Calu3 (cell line): ENCODE measurements at regions of chr11 and their contacts with region 1.

Region 1: GRCh38 chr11:28756977-28757376 is 648.8 kb downstream of the METTL15 start:
- DNase-seq: no peak
- H3K4me3 Mint-ChIP-seq: no peak overlapping the region
- H3K27ac Mint-ChIP-seq: peak overlapping the region; percentile 90
- H3K4me1 Mint-ChIP-seq: peaks cover 54% of the 10 kb centered on the region
- H3K27me3 Mint-ChIP-seq: no peaks in the 10 kb centered on the region
- CTCF ChIP-seq: no peak

Region 2: GRCh38 chr11:28621753-28622152 is 135.2 kb before region 1 on chr11:
- CTCF ChIA-PET with region 1: no interaction called
- intact Hi-C with region 1: loop called (anchors 5 kb)
- DNase-seq: peak; percentile 9
- H3K4me3 Mint-ChIP-seq: no peak overlapping the region
- H3K27ac Mint-ChIP-seq: peak overlapping the region; percentile 82
- H3K4me1 Mint-ChIP-seq: peaks cover 59% of the 10 kb centered on the region
- H3K27me3 Mint-ChIP-seq: no peaks in the 10 kb centered on the region
- CTCF ChIP-seq: no peak

Region 3: DNA sequence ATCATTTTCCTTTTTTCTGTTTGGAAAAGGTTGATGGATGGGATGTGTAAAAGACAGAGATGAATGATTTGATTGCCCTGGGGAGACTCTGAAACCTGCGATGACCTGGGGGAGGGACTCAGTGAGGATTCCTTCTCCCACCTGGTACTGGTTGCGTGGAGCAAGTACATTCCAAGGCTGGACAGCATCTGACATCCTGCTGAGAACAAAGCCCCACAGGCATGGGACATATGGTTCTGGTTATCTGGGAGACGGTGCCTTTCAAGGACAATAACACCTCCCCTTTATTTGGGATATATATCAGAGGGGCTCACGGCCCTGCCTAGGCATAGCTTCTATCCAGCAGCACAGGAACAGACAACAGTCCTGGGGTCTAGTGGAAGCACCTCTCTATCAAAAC is 120.9 kb before region 1 on chr11:
- CTCF ChIA-PET with region 1: no interaction called
- intact Hi-C with region 1: no loop called
- DNase-seq: no peak
- H3K4me3 Mint-ChIP-seq: no peak overlapping the region
- H3K27ac Mint-ChIP-seq: no peak overlapping the region
- H3K4me1 Mint-ChIP-seq: no peaks in the 10 kb centered on the region
- H3K27me3 Mint-ChIP-seq: no peaks in the 10 kb centered on the region
- CTCF ChIP-seq: no peak

Region 4: GRCh38 chr11:28738549-28738948 is 18.4 kb before region 1 on chr11:
- CTCF ChIA-PET with region 1: interaction called, 10 read pairs
- intact Hi-C with region 1: no loop called
- DNase-seq: no peak
- H3K4me3 Mint-ChIP-seq: no peak overlapping the region
- H3K27ac Mint-ChIP-seq: peak overlapping the region; percentile 71
- H3K4me1 Mint-ChIP-seq: peaks cover 76% of the 10 kb centered on the region
- H3K27me3 Mint-ChIP-seq: no peaks in the 10 kb centered on the region
- CTCF ChIP-seq: no peak

Region 5: GRCh38 chr11:28836285-28837081 is 79.5 kb after region 1 on chr11:
- CTCF ChIA-PET with region 1: interaction called, 10 read pairs
- intact Hi-C with region 1: loop called (anchors 1 kb)
- DNase-seq: peak; percentile 60
- H3K4me3 Mint-ChIP-seq: peak overlapping the region; percentile 59
- H3K27ac Mint-ChIP-seq: peak overlapping the region; percentile 96
- H3K4me1 Mint-ChIP-seq: peaks cover 55% of the 10 kb centered on the region
- H3K27me3 Mint-ChIP-seq: no peaks in the 10 kb centered on the region
- CTCF ChIP-seq: no peak

Region 6: DNA sequence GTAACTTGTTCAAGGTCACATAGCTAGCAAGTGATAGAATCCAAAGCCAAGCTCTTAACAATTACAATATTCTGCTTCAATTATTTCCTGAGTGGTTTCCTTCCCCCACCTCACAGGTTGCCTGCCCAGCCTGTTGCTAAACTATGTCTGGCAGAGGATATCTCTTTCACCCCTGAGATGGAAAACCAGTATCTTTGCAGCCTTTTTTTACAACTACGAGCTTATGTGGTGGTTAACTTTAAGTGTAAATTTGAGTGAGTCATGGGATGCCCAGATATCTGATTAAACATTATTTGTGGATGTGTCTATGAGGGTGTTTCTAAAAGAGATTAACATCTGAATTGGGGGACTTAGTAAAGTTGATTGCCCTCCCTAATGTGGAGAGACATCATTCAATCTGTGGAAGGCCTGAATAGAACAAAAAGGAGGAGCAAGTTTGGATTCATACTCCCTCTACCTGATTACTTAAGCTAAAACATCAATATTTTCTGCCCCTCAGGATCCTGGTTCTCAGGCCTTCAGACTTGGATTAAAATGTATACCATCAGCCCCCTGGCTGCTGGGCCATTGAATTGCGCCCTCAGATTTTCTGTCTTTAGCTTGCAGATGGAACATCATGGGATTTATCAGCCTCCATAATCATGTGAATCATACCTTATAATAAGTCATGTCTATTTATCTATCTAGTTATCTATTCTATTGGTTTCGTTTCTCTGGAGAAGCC is 263.1 kb after region 1 on chr11:
- CTCF ChIA-PET with region 1: interaction called, 5 read pairs
- intact Hi-C with region 1: loop called (anchors 5 kb)
- DNase-seq: peak; percentile 38
- H3K4me3 Mint-ChIP-seq: no peak overlapping the region
- H3K27ac Mint-ChIP-seq: peak overlapping the region; percentile 34
- H3K4me1 Mint-ChIP-seq: peaks cover 37% of the 10 kb centered on the region
- H3K27me3 Mint-ChIP-seq: no peaks in the 10 kb centered on the region
- CTCF ChIP-seq: peak; percentile 44

Region 7: GRCh38 chr11:29159552-29160465 is 402.8 kb after region 1 on chr11:
- CTCF ChIA-PET with region 1: no interaction called
- intact Hi-C with region 1: loop called (anchors 1 kb)
- DNase-seq: peak; percentile 71
- H3K4me3 Mint-ChIP-seq: no peak overlapping the region
- H3K27ac Mint-ChIP-seq: no peak overlapping the region
- H3K4me1 Mint-ChIP-seq: peaks cover 15% of the 10 kb centered on the region
- H3K27me3 Mint-ChIP-seq: no peaks in the 10 kb centered on the region
- CTCF ChIP-seq: peak; percentile 78